Naive thymus-derived CD4-positive, alpha-beta T cell (primary cell): ENCODE measurements at regions of chr7 and their contacts with region 1.

Region 1: DNA sequence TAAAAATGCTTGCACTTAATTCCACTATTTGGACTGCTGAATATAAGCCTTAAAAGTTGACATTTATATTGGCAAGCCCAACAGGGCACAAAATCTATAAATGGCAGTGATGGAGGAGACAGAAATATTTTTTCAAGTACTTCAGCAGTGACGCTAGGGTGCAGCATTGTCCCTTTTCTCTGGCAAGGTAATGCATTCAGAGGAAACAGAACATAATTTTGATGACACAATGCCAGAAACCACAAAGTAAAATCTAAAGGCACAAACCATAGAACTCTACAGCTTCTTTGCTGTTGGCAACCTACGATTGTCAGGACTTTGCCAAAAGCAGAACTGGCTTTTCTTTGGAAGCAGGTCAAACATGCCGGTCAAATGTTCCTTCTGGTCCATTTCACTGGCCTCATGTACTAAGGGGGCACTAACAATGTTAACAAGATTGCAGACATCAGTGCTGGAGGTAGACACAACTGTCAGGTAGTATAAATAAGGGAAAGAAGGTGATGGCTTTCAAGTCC is 30.9 kb upstream of the FAM133B start:
- DNase-seq: peak; percentile 39 to 84 (median 73)
- ATAC-seq: peak; percentile 96
- H3K4me3 ChIP-seq: no peak overlapping the region
- H3K4me3 Mint-ChIP-seq: peak overlapping the region in 9 of 10 donors; percentile 15 to 84 (median 54)
- H3K27ac ChIP-seq: peak overlapping the region; percentile 24
- H3K27ac Mint-ChIP-seq: peak overlapping the region; percentile 17 to 92 (median 84)
- H3K4me1 ChIP-seq: peaks cover 6 to 20% of the 10 kb centered on the region in 2 donors
- H3K4me1 Mint-ChIP-seq: peaks cover 8 to 58% (median 33%) of the 10 kb centered on the region in 7 donors
- H3K27me3 ChIP-seq: no peaks in the 10 kb centered on the region
- H3K27me3 Mint-ChIP-seq: no peaks in the 10 kb centered on the region

Region 2: DNA sequence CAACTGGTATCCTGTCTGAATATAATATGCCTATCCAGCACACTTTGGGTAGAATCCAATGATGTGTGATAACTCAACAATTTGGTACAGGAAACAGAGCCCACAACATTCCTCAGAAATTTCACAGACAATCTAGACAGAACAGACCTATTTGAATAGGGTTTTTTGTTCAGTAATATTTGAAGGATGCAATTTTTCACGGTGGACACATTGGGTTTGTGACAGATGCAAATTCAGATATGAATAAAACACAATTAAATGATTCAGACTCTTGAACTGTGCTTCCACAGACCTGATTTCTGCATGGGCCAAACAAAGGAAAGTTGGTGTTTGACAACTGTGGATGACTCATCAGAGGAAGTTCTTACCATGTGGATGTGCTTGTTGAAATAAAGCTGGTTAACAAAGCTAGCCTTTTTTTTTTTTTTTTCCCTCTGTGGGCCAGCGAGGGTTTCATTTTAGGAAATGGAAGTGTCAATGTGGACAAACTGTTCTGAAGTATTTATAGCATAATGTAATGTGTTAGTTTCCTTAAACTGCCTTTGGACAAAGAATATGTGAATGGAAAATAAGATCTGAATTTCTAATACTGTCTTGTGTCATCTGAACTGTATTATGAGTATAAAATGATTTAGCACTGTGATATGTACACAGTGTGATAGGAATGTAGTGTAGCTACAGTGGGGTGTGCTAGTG is 12.3 kb after region 1 on chr7:
- CTCF ChIA-PET with region 1: interaction called, 3 read pairs
- POLR2A ChIA-PET with region 1: no interaction called
- intact Hi-C with region 1: loop called (anchors 1 kb)
- DNase-seq: peak in 1 of 9 donors; percentile 13
- ATAC-seq: peak; percentile 76
- H3K4me3 ChIP-seq: no peak overlapping the region
- H3K4me3 Mint-ChIP-seq: peak overlapping the region in 3 of 10 donors; percentile 23 to 70 (median 57)
- H3K27ac ChIP-seq: no peak overlapping the region
- H3K27ac Mint-ChIP-seq: peak overlapping the region in 3 of 9 donors; percentile 50 to 87 (median 53)
- H3K4me1 ChIP-seq: peaks cover 3 to 18% of the 10 kb centered on the region in 2 donors
- H3K4me1 Mint-ChIP-seq: peaks cover 20 to 56% (median 34%) of the 10 kb centered on the region in 7 donors
- H3K27me3 ChIP-seq: no peaks in the 10 kb centered on the region
- H3K27me3 Mint-ChIP-seq: no peaks in the 10 kb centered on the region

Region 3: GRCh38 chr7:92669616-92670165 is 48.6 kb after region 1 on chr7:
- CTCF ChIA-PET with region 1: no interaction called
- POLR2A ChIA-PET with region 1: no interaction called
- intact Hi-C with region 1: loop called in 1 of 2 experiments (anchors 1 kb)
- DNase-seq: no peak
- ATAC-seq: no peak
- H3K4me3 ChIP-seq: no peak overlapping the region
- H3K4me3 Mint-ChIP-seq: peak overlapping the region in 1 of 10 donors; percentile 23
- H3K27ac ChIP-seq: no peak overlapping the region
- H3K27ac Mint-ChIP-seq: peak overlapping the region in 2 of 9 donors; percentile 52 to 53
- H3K4me1 ChIP-seq: no peaks in the 10 kb centered on the region
- H3K4me1 Mint-ChIP-seq: peaks cover 9 to 72% (median 18%) of the 10 kb centered on the region in 7 donors
- H3K27me3 ChIP-seq: no peaks in the 10 kb centered on the region
- H3K27me3 Mint-ChIP-seq: no peaks in the 10 kb centered on the region

Region 4: DNA sequence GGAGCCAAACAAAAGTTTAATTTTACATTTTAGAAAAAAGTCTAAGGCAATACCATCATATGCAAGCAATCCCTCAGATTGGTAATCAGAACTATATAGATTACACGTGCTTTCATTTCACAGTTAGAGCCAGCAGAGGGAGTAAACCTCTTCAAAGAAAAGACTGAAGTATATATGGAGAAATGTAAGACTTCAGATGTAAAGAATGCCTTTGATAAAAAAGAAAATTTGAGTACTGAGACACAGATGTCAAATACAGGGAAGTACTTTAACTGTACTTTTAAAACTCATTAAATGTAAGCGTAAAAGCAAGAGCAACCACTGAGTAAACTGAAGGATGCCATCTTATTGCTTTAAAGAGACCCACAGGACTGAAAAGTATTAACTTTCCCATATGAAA is 70.5 kb after region 1 on chr7:
- CTCF ChIA-PET with region 1: interaction called, 3 read pairs
- POLR2A ChIA-PET with region 1: no interaction called
- intact Hi-C with region 1: loop called (anchors 1 kb)
- DNase-seq: peak in 7 of 9 donors; percentile 33 to 59 (median 41)
- ATAC-seq: peak; percentile 93
- H3K4me3 ChIP-seq: no peak overlapping the region
- H3K4me3 Mint-ChIP-seq: peak overlapping the region in 4 of 10 donors; percentile 18 to 50 (median 20)
- H3K27ac ChIP-seq: no peak overlapping the region
- H3K27ac Mint-ChIP-seq: peak overlapping the region in 8 of 9 donors; percentile 1 to 75 (median 58)
- H3K4me1 ChIP-seq: peaks cover 12 to 15% of the 10 kb centered on the region in 2 donors
- H3K4me1 Mint-ChIP-seq: peaks cover 7 to 74% (median 38%) of the 10 kb centered on the region in 7 donors
- H3K27me3 ChIP-seq: no peaks in the 10 kb centered on the region
- H3K27me3 Mint-ChIP-seq: no peaks in the 10 kb centered on the region

Region 5: DNA sequence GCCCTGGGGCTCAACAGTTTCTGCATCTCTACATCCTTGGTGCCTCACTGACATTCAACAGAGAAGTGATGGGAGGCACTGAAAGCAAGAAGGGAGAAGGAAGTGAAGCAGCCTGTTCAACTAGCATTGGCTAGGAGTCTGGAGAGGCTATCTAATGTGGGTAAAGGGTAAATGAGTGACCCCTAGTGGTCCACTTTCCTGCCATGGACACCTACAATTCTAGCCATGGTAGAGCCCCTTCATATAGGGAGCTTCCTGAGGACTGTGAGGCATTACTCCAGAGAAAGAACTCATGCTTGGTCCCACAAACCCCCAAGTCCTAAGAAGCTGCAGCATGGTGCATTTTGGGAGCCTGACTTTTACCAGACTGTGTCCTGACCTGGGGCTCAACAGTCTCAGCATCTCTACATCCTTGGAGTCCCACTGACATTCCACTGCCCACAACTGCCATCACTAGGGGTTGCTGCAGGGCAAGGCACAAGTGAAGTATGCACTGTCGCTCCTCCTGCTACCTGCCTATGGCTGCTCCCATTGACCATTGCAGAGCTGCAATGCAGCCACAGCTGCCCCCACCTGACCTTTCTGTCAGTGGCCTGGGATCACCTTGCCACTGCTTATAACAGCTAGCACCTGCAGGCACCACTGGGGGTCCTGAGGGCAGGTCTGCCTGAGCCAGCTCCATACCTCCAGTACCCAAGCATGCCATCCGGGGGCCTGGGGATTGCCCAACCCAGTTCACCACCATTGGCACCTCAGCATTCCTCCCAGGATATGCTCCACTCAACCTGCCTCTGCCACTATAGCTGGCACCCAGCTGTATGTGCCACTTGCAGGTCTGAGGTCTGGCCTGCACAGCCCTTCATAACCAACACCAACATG is 259.4 kb after region 1 on chr7:
- CTCF ChIA-PET with region 1: no interaction called
- POLR2A ChIA-PET with region 1: no interaction called
- intact Hi-C with region 1: loop called in 1 of 2 experiments (anchors 1 kb)
- DNase-seq: no peak
- ATAC-seq: peak; percentile 42
- H3K4me3 ChIP-seq: no peak overlapping the region
- H3K4me3 Mint-ChIP-seq: no peak overlapping the region
- H3K27ac ChIP-seq: no peak overlapping the region
- H3K27ac Mint-ChIP-seq: no peak overlapping the region
- H3K4me1 ChIP-seq: peaks cover 0 to 9% of the 10 kb centered on the region in 2 donors
- H3K4me1 Mint-ChIP-seq: peaks cover 8 to 33% (median 25%) of the 10 kb centered on the region in 7 donors
- H3K27me3 ChIP-seq: no peaks in the 10 kb centered on the region
- H3K27me3 Mint-ChIP-seq: peaks cover 0 to 7% (median 0%) of the 10 kb centered on the region in 5 donors

Region 6: DNA sequence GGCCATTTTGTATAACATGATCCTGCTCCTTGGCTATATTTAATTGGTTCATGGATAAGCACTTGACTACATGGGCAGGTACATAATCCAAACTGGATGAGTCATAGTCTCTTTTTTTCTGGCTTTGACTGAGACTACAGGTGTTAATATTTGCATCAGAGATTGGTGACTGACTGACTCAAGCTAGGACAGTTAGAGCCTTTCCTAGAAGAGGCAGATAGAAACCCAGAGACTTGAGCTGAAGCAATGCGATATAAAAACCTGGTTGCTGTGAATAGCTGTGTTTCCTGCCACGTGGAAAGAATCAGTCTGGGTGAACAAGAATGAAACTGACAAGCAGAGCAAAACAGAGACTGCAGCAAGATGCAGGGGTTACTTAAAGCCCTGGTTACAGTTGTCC is 415.7 kb after region 1 on chr7:
- CTCF ChIA-PET with region 1: no interaction called
- POLR2A ChIA-PET with region 1: no interaction called
- intact Hi-C with region 1: loop called in 1 of 2 experiments (anchors 5 kb)
- DNase-seq: no peak
- ATAC-seq: peak; percentile 36
- H3K4me3 ChIP-seq: no peak overlapping the region
- H3K4me3 Mint-ChIP-seq: peak overlapping the region in 2 of 10 donors; percentile 9 to 16
- H3K27ac ChIP-seq: no peak overlapping the region
- H3K27ac Mint-ChIP-seq: peak overlapping the region in 3 of 9 donors; percentile 6 to 78 (median 49)
- H3K4me1 ChIP-seq: peaks cover 0 to 7% of the 10 kb centered on the region in 2 donors
- H3K4me1 Mint-ChIP-seq: peaks cover 0 to 30% (median 13%) of the 10 kb centered on the region in 7 donors
- H3K27me3 ChIP-seq: no peaks in the 10 kb centered on the region
- H3K27me3 Mint-ChIP-seq: no peaks in the 10 kb centered on the region